B cell (primary cell): ENCODE measurements at regions of chr10 and their contacts with region 1.

Region 1: GRCh38 chr10:32256613-32257437 is 90.1 kb downstream of the EPC1 start:
- DNase-seq: peak; percentile 81
- ATAC-seq: peak; percentile 92
- H3K4me3 ChIP-seq: no peak overlapping the region
- H3K4me3 Mint-ChIP-seq: peak overlapping the region; percentile 16
- H3K27ac ChIP-seq: no peak overlapping the region
- H3K27ac Mint-ChIP-seq: no peak overlapping the region
- H3K4me1 ChIP-seq: peaks cover 3 to 7% of the 10 kb centered on the region in 2 donors
- H3K4me1 Mint-ChIP-seq: peaks cover 6% of the 10 kb centered on the region
- H3K27me3 ChIP-seq: no peaks in the 10 kb centered on the region
- H3K27me3 Mint-ChIP-seq: no peaks in the 10 kb centered on the region
- CTCF ChIP-seq: peak; percentile 93

Region 2: GRCh38 chr10:32112055-32112454 is 144.8 kb before region 1 on chr10:
- CTCF ChIA-PET with region 1: no interaction called
- POLR2A ChIA-PET with region 1: no interaction called
- intact Hi-C with region 1: no loop called
- DNase-seq: no peak
- ATAC-seq: no peak
- H3K4me3 ChIP-seq: no peak overlapping the region
- H3K4me3 Mint-ChIP-seq: no peak overlapping the region
- H3K27ac ChIP-seq: no peak overlapping the region
- H3K27ac Mint-ChIP-seq: no peak overlapping the region
- H3K4me1 ChIP-seq: no peaks in the 10 kb centered on the region
- H3K4me1 Mint-ChIP-seq: no peaks in the 10 kb centered on the region
- H3K27me3 ChIP-seq: peaks cover 0 to 4% (median 0%) of the 10 kb centered on the region in 4 experiments
- H3K27me3 Mint-ChIP-seq: peaks cover 4% of the 10 kb centered on the region
- CTCF ChIP-seq: no peak

Region 3: GRCh38 chr10:32171204-32171603 is 85.6 kb before region 1 on chr10:
- CTCF ChIA-PET with region 1: no interaction called
- POLR2A ChIA-PET with region 1: no interaction called
- intact Hi-C with region 1: no loop called
- DNase-seq: no peak
- ATAC-seq: no peak
- H3K4me3 ChIP-seq: no peak overlapping the region
- H3K4me3 Mint-ChIP-seq: no peak overlapping the region
- H3K27ac ChIP-seq: no peak overlapping the region
- H3K27ac Mint-ChIP-seq: no peak overlapping the region
- H3K4me1 ChIP-seq: no peaks in the 10 kb centered on the region
- H3K4me1 Mint-ChIP-seq: no peaks in the 10 kb centered on the region
- H3K27me3 ChIP-seq: no peaks in the 10 kb centered on the region
- H3K27me3 Mint-ChIP-seq: peaks cover 5% of the 10 kb centered on the region
- CTCF ChIP-seq: no peak

Region 4: DNA sequence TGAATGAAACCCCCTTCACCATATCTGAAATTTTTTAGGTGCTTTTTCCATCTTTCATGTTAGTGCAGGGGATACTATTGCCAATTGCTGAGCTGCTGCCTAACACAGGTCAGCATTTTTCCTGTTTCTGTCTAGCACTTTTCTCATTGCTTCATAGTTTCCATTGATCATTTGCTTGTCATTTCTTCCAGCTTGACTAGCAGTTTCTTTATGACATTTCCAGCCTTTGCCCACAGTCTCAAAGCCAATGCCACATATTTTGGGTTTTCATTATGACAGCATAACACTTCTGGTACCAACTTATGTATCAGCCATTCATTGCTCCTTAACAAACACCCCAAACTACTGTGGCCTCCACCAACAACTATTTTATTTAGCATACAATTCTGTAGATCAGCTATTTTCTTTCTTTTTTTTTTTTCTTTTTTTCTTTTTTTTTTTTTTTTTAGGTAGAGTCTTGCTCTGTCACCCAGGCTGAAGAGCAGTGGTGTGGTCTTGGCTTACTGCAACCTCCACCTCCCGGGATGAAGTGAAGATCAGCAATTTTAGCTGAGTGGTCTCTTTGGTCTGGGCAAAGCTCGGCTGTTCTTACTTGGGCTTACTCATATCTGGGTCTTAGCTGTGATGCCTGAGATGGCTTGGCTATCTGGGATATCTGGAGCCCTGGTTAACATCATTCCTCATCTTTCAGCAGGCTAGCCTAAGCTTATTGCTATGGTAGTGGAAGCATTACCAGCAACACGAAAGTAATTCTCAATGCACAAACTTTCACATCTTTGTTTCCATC is 12.2 kb before region 1 on chr10:
- CTCF ChIA-PET with region 1: interaction called, 11 read pairs
- POLR2A ChIA-PET with region 1: no interaction called
- intact Hi-C with region 1: no loop called
- DNase-seq: no peak
- ATAC-seq: no peak
- H3K4me3 ChIP-seq: no peak overlapping the region
- H3K4me3 Mint-ChIP-seq: no peak overlapping the region
- H3K27ac ChIP-seq: no peak overlapping the region
- H3K27ac Mint-ChIP-seq: no peak overlapping the region
- H3K4me1 ChIP-seq: no peaks in the 10 kb centered on the region
- H3K4me1 Mint-ChIP-seq: no peaks in the 10 kb centered on the region
- H3K27me3 ChIP-seq: peaks cover 0 to 3% (median 0%) of the 10 kb centered on the region in 4 experiments
- H3K27me3 Mint-ChIP-seq: peaks cover 20% of the 10 kb centered on the region
- CTCF ChIP-seq: no peak

Region 5: DNA sequence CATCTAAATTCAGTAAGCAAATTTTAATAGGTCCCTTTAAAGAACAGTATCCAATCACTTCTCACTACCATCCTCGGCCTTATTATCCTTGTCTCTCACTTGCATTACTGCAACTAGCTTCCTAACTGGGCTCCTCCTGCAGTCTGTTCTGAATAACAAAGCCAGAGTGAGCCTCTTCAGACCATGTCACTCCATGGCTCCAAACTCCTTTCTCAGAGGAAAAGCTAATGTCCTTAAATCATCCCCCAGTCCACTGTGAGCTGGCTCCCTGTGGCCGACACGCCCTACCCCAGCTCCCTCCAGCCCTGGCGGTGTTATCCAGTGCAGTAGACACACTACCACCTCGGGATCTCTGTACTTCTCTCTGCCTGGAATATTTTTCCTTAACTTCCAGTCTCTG is 10.2 kb after region 1 on chr10:
- CTCF ChIA-PET with region 1: interaction called, 33 read pairs
- POLR2A ChIA-PET with region 1: no interaction called
- intact Hi-C with region 1: no loop called
- DNase-seq: no peak
- ATAC-seq: no peak
- H3K4me3 ChIP-seq: no peak overlapping the region
- H3K4me3 Mint-ChIP-seq: no peak overlapping the region
- H3K27ac ChIP-seq: no peak overlapping the region
- H3K27ac Mint-ChIP-seq: peak overlapping the region; percentile 46
- H3K4me1 ChIP-seq: no peaks in the 10 kb centered on the region
- H3K4me1 Mint-ChIP-seq: no peaks in the 10 kb centered on the region
- H3K27me3 ChIP-seq: no peaks in the 10 kb centered on the region
- H3K27me3 Mint-ChIP-seq: no peaks in the 10 kb centered on the region
- CTCF ChIP-seq: no peak